CD8-positive, alpha-beta T cell (primary cell): ENCODE measurements at regions of chr13 and their contacts with region 1.

Region 1: GRCh38 chr13:74287724-74288169 is 153.5 kb upstream of the KLF12 start:
- DNase-seq: peak; percentile 64 to 98 (median 85)
- ATAC-seq: peak; percentile 67
- H3K4me3 ChIP-seq: peak overlapping the region; percentile 27 to 35
- H3K4me3 Mint-ChIP-seq: peak overlapping the region; percentile 74
- H3K27ac ChIP-seq: peak overlapping the region; percentile 48 to 82
- H3K27ac Mint-ChIP-seq: peak overlapping the region; percentile 93
- H3K4me1 ChIP-seq: peaks cover 45% of the 10 kb centered on the region
- H3K4me1 Mint-ChIP-seq: peaks cover 62% of the 10 kb centered on the region
- H3K27me3 ChIP-seq: no peaks in the 10 kb centered on the region
- H3K27me3 Mint-ChIP-seq: no peaks in the 10 kb centered on the region
- CTCF ChIP-seq: no peak

Region 2: GRCh38 chr13:72781451-72782439 is 1506.0 kb before region 1 on chr13 and contains the starts of genes DIS3 and PIBF1:
- CTCF ChIA-PET with region 1: no interaction called
- POLR2A ChIA-PET with region 1: no interaction called
- intact Hi-C with region 1: loop called in 1 of 2 experiments (anchors 5 kb)
- DNase-seq: peak; percentile 88 to 98 (median 93)
- ATAC-seq: peak; percentile 96
- H3K4me3 ChIP-seq: peak within 1 kb of the TSS; percentile 83 to 96
- H3K4me3 Mint-ChIP-seq: peak within 1 kb of the TSS; percentile 97
- H3K27ac ChIP-seq: peak within 1 kb of the TSS; percentile 88 to 91
- H3K27ac Mint-ChIP-seq: peak within 1 kb of the TSS; percentile 97
- H3K4me1 ChIP-seq: peaks cover 48% of the 10 kb centered on the region
- H3K4me1 Mint-ChIP-seq: peaks cover 70% of the 10 kb centered on the region
- H3K27me3 ChIP-seq: no peaks in the 10 kb centered on the region
- H3K27me3 Mint-ChIP-seq: no peaks in the 10 kb centered on the region
- CTCF ChIP-seq: no peak
- total RNA-seq, gene DIS3: 60.8 to 64.5 TPM
- total RNA-seq, gene PIBF1: 13.1 to 14.3 TPM

Region 3: GRCh38 chr13:73849292-73849691 is 438.5 kb before region 1 on chr13:
- CTCF ChIA-PET with region 1: interaction called, 17 read pairs
- POLR2A ChIA-PET with region 1: interaction called, 3 read pairs
- intact Hi-C with region 1: loop called in 1 of 2 experiments (anchors 1 kb)
- DNase-seq: peak in 5 of 9 experiments; percentile 20 to 63 (median 24)
- ATAC-seq: peak; percentile 57
- H3K4me3 ChIP-seq: no peak overlapping the region
- H3K4me3 Mint-ChIP-seq: no peak overlapping the region
- H3K27ac ChIP-seq: no peak overlapping the region
- H3K27ac Mint-ChIP-seq: peak overlapping the region; percentile 60
- H3K4me1 ChIP-seq: peaks cover 4% of the 10 kb centered on the region
- H3K4me1 Mint-ChIP-seq: peaks cover 59% of the 10 kb centered on the region
- H3K27me3 ChIP-seq: no peaks in the 10 kb centered on the region
- H3K27me3 Mint-ChIP-seq: no peaks in the 10 kb centered on the region
- CTCF ChIP-seq: peak; percentile 47

Region 4: GRCh38 chr13:74026753-74027152 is 261.0 kb before region 1 on chr13:
- CTCF ChIA-PET with region 1: interaction called, 19 read pairs
- POLR2A ChIA-PET with region 1: interaction called, 8 read pairs
- intact Hi-C with region 1: loop called in 1 of 2 experiments (anchors 5 kb)
- DNase-seq: peak; percentile 38 to 89 (median 75)
- ATAC-seq: peak; percentile 95
- H3K4me3 ChIP-seq: peak overlapping the region; percentile 6 to 32
- H3K4me3 Mint-ChIP-seq: peak overlapping the region; percentile 82
- H3K27ac ChIP-seq: peak overlapping the region; percentile 23 to 81
- H3K27ac Mint-ChIP-seq: peak overlapping the region; percentile 94
- H3K4me1 ChIP-seq: peaks cover 64% of the 10 kb centered on the region
- H3K4me1 Mint-ChIP-seq: peaks cover 88% of the 10 kb centered on the region
- H3K27me3 ChIP-seq: no peaks in the 10 kb centered on the region
- H3K27me3 Mint-ChIP-seq: no peaks in the 10 kb centered on the region
- CTCF ChIP-seq: no peak

Region 5: DNA sequence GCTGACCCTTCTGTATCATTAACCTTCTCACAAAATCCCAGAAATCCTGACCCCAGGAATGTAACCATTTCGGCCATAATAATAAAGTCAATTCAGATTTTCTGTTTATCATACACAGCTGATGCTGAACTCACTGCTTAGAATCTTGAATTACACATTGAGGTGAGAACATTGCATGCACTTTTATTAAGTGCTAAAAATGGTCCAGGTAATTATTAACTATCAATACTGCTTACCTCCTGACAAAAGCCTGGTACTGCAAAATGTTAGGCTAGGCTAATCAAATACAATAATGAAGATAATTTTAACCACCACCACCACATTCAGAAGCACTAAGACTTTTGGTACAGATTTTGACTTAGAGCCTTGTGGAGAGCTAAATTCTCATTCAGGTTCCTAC is 189.7 kb before region 1 on chr13:
- CTCF ChIA-PET with region 1: interaction called, 11 read pairs
- POLR2A ChIA-PET with region 1: interaction called, 3 read pairs
- intact Hi-C with region 1: no loop called
- DNase-seq: no peak
- ATAC-seq: no peak
- H3K4me3 ChIP-seq: no peak overlapping the region
- H3K4me3 Mint-ChIP-seq: no peak overlapping the region
- H3K27ac ChIP-seq: no peak overlapping the region
- H3K27ac Mint-ChIP-seq: peak overlapping the region; percentile 53
- H3K4me1 ChIP-seq: peaks cover 39% of the 10 kb centered on the region
- H3K4me1 Mint-ChIP-seq: peaks cover 75% of the 10 kb centered on the region
- H3K27me3 ChIP-seq: no peaks in the 10 kb centered on the region
- H3K27me3 Mint-ChIP-seq: no peaks in the 10 kb centered on the region
- CTCF ChIP-seq: no peak

Region 6: DNA sequence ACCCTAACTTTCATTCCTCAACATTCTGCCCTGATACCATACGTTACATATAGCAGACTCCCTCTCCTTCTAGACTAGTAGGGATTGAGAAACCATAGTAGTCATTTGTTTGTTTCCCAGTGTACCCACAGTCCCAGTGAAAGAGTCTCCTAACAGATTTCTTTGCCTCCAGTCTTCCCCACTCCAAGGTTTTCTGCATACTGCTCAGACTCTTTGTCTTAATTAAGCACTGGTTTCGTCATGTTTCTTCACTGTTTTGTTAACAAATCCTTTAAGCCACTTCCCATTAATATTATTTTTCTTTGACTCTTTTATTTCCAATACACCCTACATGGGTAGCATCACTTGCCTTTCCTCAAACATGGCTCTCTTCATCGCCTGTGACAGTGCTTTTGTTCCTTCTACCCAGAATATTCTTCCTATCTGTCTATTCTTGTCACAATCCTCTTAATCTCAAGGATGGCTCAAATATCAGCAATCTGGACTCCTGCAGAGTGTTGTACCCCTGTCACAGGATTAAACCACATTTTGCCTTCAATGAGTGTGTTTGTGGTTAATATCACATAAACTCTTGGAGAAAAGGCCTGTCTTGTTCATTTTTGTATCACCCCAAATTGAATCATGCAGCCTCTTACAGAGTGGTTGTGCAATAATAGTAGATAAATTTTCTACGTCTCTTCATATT is 60.8 kb before region 1 on chr13:
- CTCF ChIA-PET with region 1: interaction called, 10 read pairs
- POLR2A ChIA-PET with region 1: interaction called, 3 read pairs
- intact Hi-C with region 1: loop called (anchors 1 to 5 kb)
- DNase-seq: no peak
- ATAC-seq: no peak
- H3K4me3 ChIP-seq: no peak overlapping the region
- H3K4me3 Mint-ChIP-seq: no peak overlapping the region
- H3K27ac ChIP-seq: no peak overlapping the region
- H3K27ac Mint-ChIP-seq: no peak overlapping the region
- H3K4me1 ChIP-seq: peaks cover 13% of the 10 kb centered on the region
- H3K4me1 Mint-ChIP-seq: peaks cover 24% of the 10 kb centered on the region
- H3K27me3 ChIP-seq: no peaks in the 10 kb centered on the region
- H3K27me3 Mint-ChIP-seq: no peaks in the 10 kb centered on the region
- CTCF ChIP-seq: no peak

Region 7: GRCh38 chr13:74264333-74264732 is 23.4 kb before region 1 on chr13:
- CTCF ChIA-PET with region 1: interaction called, 15 read pairs
- POLR2A ChIA-PET with region 1: interaction called, 3 read pairs
- intact Hi-C with region 1: no loop called
- DNase-seq: no peak
- ATAC-seq: no peak
- H3K4me3 ChIP-seq: no peak overlapping the region
- H3K4me3 Mint-ChIP-seq: no peak overlapping the region
- H3K27ac ChIP-seq: no peak overlapping the region
- H3K27ac Mint-ChIP-seq: no peak overlapping the region
- H3K4me1 ChIP-seq: peaks cover 9% of the 10 kb centered on the region
- H3K4me1 Mint-ChIP-seq: peaks cover 15% of the 10 kb centered on the region
- H3K27me3 ChIP-seq: no peaks in the 10 kb centered on the region
- H3K27me3 Mint-ChIP-seq: no peaks in the 10 kb centered on the region
- CTCF ChIP-seq: no peak